Aorta (tissue), 5 donors: ENCODE measurements at regions of chr7 and their contacts with region 1.

Region 1: GRCh38 chr7:151782598-151783448 is 94.1 kb downstream of the PRKAG2 start:
- DNase-seq: peak; percentile 84 to 92
- ATAC-seq: peak; percentile 83
- H3K4me3 ChIP-seq: no peak overlapping the region
- H3K27ac ChIP-seq: no peak overlapping the region
- H3K4me1 ChIP-seq: no peaks in the 10 kb centered on the region
- H3K27me3 ChIP-seq: no peaks in the 10 kb centered on the region

Region 2: DNA sequence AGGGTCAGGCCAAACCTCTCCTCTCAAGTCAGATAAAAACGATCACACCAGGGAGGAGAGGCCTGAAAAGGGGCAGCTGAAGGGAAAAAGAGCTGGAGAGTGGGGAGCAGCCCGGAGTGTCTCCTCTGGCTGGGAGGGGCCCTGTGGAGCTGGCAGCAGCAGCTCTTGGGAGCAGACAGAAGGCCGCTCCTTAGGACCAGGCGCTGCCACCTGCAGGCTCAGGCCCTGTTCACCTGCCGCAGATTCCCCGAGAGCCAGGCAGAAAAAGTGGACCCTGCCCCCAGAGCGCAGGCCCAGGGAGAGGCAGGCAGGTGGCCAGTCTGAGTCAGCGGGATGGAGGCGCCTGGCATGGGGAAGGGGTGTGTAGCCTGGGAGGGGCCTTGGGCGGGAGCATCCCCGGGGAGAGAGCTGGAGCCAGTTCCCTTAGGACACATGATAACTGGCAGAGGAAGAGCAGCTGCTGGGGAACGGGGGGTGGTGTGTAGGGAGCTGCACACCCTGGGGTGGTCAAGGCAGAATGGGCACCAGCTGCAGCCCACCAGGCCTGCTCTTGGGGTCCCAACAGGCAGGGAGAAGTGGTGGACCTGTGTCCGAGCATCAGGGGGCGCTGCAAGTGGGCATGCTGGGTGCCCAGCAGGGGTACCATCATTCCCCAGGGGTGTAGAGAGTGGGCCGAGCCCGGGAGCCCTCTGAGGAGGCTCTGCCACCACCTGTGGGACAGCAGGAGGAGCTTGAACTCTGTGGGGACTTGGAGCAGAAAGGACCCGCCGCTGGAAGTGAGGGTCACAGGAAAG is 85.9 kb before region 1 on chr7:
- intact Hi-C with region 1: no loop called
- DNase-seq: no peak
- ATAC-seq: no peak
- H3K4me3 ChIP-seq: no peak overlapping the region
- H3K27ac ChIP-seq: no peak overlapping the region
- H3K4me1 ChIP-seq: no peaks in the 10 kb centered on the region
- H3K27me3 ChIP-seq: no peaks in the 10 kb centered on the region

Region 3: GRCh38 chr7:151838861-151839391 is 56.1 kb after region 1 on chr7:
- intact Hi-C with region 1: no loop called
- DNase-seq: peak; percentile 73 to 75
- ATAC-seq: no peak
- H3K4me3 ChIP-seq: no peak overlapping the region
- H3K27ac ChIP-seq: no peak overlapping the region
- H3K4me1 ChIP-seq: no peaks in the 10 kb centered on the region
- H3K27me3 ChIP-seq: no peaks in the 10 kb centered on the region

Region 4: GRCh38 chr7:151932358-151932876 is 149.6 kb after region 1 on chr7:
- intact Hi-C with region 1: loop called in 1 of 2 experiments (anchors 5 kb)
- DNase-seq: peak in 1 of 2 donors; percentile 50
- ATAC-seq: peak; percentile 76
- H3K4me3 ChIP-seq: no peak overlapping the region
- H3K27ac ChIP-seq: no peak overlapping the region
- H3K4me1 ChIP-seq: no peaks in the 10 kb centered on the region
- H3K27me3 ChIP-seq: no peaks in the 10 kb centered on the region

Region 5: DNA sequence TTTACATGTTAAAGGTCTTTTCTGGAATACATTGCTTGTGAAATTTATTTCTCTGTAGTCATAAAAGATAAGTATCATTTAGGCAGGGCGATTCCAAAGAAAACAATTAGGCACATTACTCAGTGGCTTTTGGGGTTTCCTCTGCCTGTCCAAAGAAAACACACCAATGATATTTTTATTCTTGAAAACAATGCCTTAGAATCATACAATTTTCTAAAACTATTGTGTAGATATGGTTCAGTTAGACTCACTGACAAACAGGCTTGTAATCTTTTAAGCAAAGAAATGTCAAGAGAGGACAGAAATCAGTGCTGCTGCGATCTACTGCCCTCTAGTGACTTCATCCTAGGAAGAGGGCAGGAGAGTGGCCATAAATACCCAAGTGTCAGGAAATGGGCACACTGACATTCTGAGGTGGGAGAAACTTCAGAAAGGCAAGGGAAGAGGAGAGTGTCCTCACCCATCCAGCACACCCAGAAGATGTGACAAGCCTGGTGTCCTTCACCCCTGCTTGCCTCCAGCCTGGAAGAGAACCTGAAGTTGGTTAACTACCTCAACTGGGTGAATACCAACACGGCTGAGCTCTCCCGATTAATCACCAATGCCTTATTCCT is 363.1 kb after region 1 on chr7:
- intact Hi-C with region 1: loop called (anchors 10 kb)
- DNase-seq: no peak
- ATAC-seq: peak; percentile 77
- H3K4me3 ChIP-seq: no peak overlapping the region
- H3K27ac ChIP-seq: peak overlapping the region in 1 of 2 donors; percentile 58
- H3K4me1 ChIP-seq: peaks cover 2 to 3% of the 10 kb centered on the region in 2 donors
- H3K27me3 ChIP-seq: no peaks in the 10 kb centered on the region